ENCODE measurements at regions of chr3 and their contacts with region 1.

Region 1: GRCh38 chr3:66938338-66938963 is 59.7 kb upstream of the KBTBD8 start:
- DNase-seq: peak in 1 of 2 experiments; percentile 9
- H3K4me3 ChIP-seq: no peak overlapping the region
- H3K27ac ChIP-seq: no peak overlapping the region
- H3K4me1 ChIP-seq: no peaks in the 10 kb centered on the region
- H3K27me3 ChIP-seq: peaks cover 11% of the 10 kb centered on the region; the same call in 1 of the 2 replicates
- CTCF ChIP-seq: peak; percentile 68

Region 2: DNA sequence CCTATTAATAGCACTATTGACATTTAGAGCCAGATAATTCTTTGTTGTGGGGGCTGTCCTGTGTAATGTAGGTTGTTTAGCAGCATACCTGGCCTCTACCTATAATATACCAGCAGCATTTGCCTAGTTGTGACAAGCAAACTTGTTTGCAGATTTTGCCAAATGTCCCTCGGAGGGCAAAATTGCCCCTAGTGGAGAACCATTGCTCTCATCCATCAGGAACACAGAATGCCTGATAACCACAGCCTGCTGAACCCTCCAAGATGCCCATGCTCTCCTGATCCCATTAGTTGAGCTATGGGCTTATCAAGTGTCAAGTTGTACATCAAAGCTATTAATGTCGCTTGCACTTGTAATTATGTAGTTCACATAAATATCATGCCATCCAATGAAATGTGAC is 44.6 kb after region 1 on chr3:
- CTCF ChIA-PET with region 1: no interaction called
- POLR2A ChIA-PET with region 1: no interaction called
- intact Hi-C with region 1: no loop called
- DNase-seq: no peak
- H3K4me3 ChIP-seq: no peak overlapping the region
- H3K27ac ChIP-seq: no peak overlapping the region
- H3K4me1 ChIP-seq: no peaks in the 10 kb centered on the region
- H3K27me3 ChIP-seq: peaks cover 38% of the 10 kb centered on the region
- CTCF ChIP-seq: no peak

Region 3: DNA sequence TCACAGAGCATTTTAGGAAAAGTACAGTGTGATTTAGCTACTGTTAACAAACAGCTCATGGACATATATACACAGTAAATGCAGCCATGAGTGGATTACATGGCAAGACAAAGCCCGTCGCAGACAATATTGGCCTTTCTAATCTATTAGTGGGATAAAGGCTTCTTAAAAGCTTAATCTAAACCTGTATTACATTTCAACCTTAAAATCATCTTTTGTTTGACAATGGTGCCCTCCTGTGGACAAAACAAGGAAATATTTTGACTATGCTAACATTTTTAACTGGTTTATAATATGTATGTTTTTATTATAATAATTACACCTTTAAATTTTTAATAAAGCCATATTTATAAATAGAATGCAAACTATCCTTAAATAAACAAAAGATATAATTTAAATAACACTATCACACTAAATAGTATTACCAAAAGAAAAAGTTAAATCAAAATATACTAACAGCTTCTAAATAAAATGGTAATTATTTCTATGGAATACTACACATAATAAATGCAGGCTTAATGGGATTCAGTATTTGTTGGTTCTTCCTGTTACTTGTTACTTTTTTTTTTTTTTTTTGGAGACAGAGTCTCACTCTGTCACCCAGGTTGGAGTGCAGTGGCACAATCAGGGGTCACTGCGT is 1955.3 kb after region 1 on chr3:
- CTCF ChIA-PET with region 1: interaction called, 12 read pairs
- POLR2A ChIA-PET with region 1: no interaction called
- intact Hi-C with region 1: no loop called
- DNase-seq: no peak
- H3K4me3 ChIP-seq: no peak overlapping the region
- H3K27ac ChIP-seq: no peak overlapping the region
- H3K4me1 ChIP-seq: no peaks in the 10 kb centered on the region
- H3K27me3 ChIP-seq: 0 out of 2 replicates have a peak, but pooled peaks cover 9% of the 10 kb centered on the region
- CTCF ChIP-seq: peak; percentile 60